ENCODE measurements at regions of chr11 and their contacts with region 1.

Region 1: GRCh38 chr11:76752321-76753185 is 30.6 kb upstream of the TSKU start:
- DNase-seq: peak; percentile 94 to 97 (median 95)
- H3K4me3 ChIP-seq: no peak overlapping the region
- H3K27ac ChIP-seq: peak overlapping the region; percentile 67 to 94
- H3K4me1 ChIP-seq: peaks cover 11% of the 10 kb centered on the region
- H3K27me3 ChIP-seq: no peaks in the 10 kb centered on the region
- CTCF ChIP-seq: no peak
- EP300 ChIP-seq: peak; percentile 17
- POLR2A ChIP-seq: no peak

Region 2: GRCh38 chr11:76799066-76799804 is 46.7 kb after region 1 on chr11:
- intact Hi-C with region 1: loop called in 1 of 4 experiments (anchors 5 kb)
- DNase-seq: peak; percentile 84 to 95 (median 92)
- H3K4me3 ChIP-seq: peak overlapping the region; percentile 1
- H3K27ac ChIP-seq: peak overlapping the region; percentile 45 to 63
- H3K4me1 ChIP-seq: peaks cover 5% of the 10 kb centered on the region
- H3K27me3 ChIP-seq: no peaks in the 10 kb centered on the region
- CTCF ChIP-seq: peak; percentile 95 to 99 (median 96)
- EP300 ChIP-seq: no peak
- POLR2A ChIP-seq: no peak

Region 3: DNA sequence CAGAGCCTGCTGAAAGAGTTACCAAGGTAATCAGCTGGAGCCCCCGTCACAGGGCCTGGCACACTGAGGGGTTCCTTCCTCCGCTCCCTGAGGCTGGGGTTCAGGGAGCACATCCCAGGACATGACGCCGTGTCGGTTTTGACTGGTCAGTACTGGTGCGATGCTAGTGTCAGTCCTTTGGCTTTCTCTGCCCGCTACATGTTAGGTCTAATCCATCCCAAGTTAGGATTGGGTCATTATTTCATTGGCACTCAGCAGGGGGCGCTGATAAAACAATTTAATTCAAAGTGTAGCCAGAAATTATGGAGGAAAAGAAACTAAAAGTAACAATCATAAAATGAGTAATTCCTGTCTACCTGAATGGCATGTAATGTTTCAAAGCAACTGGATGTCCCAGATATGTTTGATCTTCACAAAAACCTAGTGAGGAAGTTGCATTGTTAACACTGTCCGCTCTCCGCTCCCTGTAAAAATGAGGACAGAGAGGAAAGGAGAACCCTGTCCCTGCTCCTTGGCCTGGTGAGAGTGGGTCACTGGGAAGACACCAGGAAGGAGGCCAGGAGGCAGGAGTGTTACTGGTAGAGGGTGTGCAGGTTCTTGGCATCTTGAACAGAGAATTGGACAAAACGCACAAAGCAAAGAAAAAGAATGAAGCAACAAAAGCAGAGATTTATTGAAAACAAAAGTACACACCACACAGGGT is 57.7 kb after region 1 on chr11:
- intact Hi-C with region 1: no loop called
- DNase-seq: peak in 1 of 5 donors; percentile 33
- H3K4me3 ChIP-seq: no peak overlapping the region
- H3K27ac ChIP-seq: no peak overlapping the region
- H3K4me1 ChIP-seq: peaks cover 5% of the 10 kb centered on the region
- H3K27me3 ChIP-seq: no peaks in the 10 kb centered on the region
- CTCF ChIP-seq: peak in 1 of 3 donors; percentile 48
- EP300 ChIP-seq: no peak
- POLR2A ChIP-seq: no peak

Region 4: GRCh38 chr11:76850815-76851214 is 98.3 kb after region 1 on chr11:
- intact Hi-C with region 1: no loop called
- DNase-seq: peak in 2 of 5 donors; percentile 11 to 42
- H3K4me3 ChIP-seq: no peak overlapping the region
- H3K27ac ChIP-seq: no peak overlapping the region
- H3K4me1 ChIP-seq: peaks cover 6% of the 10 kb centered on the region
- H3K27me3 ChIP-seq: no peaks in the 10 kb centered on the region
- CTCF ChIP-seq: no peak
- EP300 ChIP-seq: no peak
- POLR2A ChIP-seq: no peak

Measured in ovary (tissue), 10 donors.